HEK293 (cell line): ENCODE measurements at regions of chr9 and their contacts with region 1.

Region 1: GRCh38 chr9:115712981-115713380 is 440.6 kb upstream of the PAPPA start:
- H3K4me3 ChIP-seq: no peak overlapping the region
- H3K27ac ChIP-seq: no peak overlapping the region
- H3K4me1 ChIP-seq: no peaks in the 10 kb centered on the region
- CTCF ChIP-seq: no peak

Region 2: GRCh38 chr9:115551396-115551795 is 161.6 kb before region 1 on chr9:
- CTCF ChIA-PET with region 1: no interaction called
- POLR2A ChIA-PET with region 1: no interaction called
- H3K4me3 ChIP-seq: no peak overlapping the region
- H3K27ac ChIP-seq: no peak overlapping the region
- H3K4me1 ChIP-seq: no peaks in the 10 kb centered on the region
- CTCF ChIP-seq: no peak

Region 3: GRCh38 chr9:115657695-115658094 is 55.3 kb before region 1 on chr9:
- CTCF ChIA-PET with region 1: no interaction called
- POLR2A ChIA-PET with region 1: no interaction called
- H3K4me3 ChIP-seq: no peak overlapping the region
- H3K27ac ChIP-seq: no peak overlapping the region
- H3K4me1 ChIP-seq: no peaks in the 10 kb centered on the region
- CTCF ChIP-seq: no peak

Region 4: DNA sequence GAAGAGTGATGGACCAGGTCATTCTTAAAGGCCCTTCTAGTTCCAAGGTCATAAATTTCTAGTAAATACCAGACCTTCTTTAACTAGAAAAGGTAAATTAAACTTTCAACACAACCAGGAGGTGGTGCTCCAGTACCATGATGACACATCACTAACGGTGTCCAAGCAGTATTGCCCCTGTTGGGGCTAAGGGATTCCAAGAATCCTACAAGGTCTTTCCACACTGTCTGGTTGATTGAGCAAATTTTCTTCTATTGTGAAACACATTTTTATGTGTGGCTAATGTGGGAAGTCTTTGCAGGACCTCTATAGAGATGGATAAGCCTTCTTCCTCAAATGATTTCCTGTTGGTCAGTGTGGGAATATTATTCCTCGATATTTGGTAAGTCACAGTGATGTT is 19.0 kb before region 1 on chr9:
- CTCF ChIA-PET with region 1: interaction called, 10 read pairs
- POLR2A ChIA-PET with region 1: no interaction called
- H3K4me3 ChIP-seq: no peak overlapping the region
- H3K27ac ChIP-seq: no peak overlapping the region
- H3K4me1 ChIP-seq: no peaks in the 10 kb centered on the region
- CTCF ChIP-seq: 0 out of 2 replicates have a peak, but pooled peaks have one; percentile 15